ENCODE measurements at regions of chr14 and their contacts with region 1.

Region 1: GRCh38 chr14:73662487-73662943 is 17.7 kb downstream of the DNAL1 start:
- DNase-seq: peak; percentile 93
- H3K4me3 Mint-ChIP-seq: no peak overlapping the region
- H3K27ac Mint-ChIP-seq: peak overlapping the region; percentile 7
- H3K4me1 Mint-ChIP-seq: peaks cover 10% of the 10 kb centered on the region
- H3K27me3 Mint-ChIP-seq: no peaks in the 10 kb centered on the region
- CTCF ChIP-seq: peak; percentile 45

Region 2: DNA sequence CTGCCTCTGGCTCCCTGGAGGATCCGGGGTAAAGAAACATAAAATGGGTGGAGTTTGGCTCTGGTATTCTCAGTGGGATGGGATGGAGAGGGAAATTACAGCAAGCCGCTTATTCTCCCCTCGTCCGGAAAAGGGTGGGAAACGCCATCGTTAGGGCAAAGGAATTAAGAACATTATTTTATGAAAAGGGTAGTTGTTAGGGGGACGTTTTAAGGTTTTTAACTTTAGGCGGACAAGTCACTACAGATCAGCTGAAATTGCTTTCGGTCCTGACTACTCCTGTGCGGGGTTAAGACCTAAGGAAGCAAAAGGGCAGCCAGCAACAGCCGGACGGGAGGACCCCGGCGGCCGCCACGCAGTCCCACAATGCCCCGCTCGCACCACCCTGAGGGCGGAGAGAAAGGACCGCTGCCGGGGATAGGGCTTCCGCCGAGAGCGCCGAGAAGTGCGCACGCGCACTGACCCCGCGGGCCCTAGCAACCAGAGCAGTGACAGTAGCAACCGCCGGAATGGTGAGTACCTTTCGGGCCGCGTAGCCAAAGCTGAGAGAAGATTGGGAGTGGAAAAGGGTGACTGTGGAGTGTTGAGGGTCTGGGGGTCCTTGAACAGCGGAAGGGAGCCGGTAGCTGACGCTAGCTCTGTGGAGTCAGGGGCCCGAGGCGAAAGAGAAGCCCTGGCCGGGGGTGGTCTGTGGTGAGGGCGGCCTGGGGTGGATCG is 17.8 kb before region 1 on chr14 and contains the start of gene DNAL1:
- CTCF ChIA-PET with region 1: no interaction called
- POLR2A ChIA-PET with region 1: interaction called, 23 read pairs
- intact Hi-C with region 1: no loop called
- DNase-seq: peak; percentile 88
- H3K4me3 Mint-ChIP-seq: peak within 1 kb of the TSS; percentile 94
- H3K27ac Mint-ChIP-seq: peak within 1 kb of the TSS; percentile 97
- H3K4me1 Mint-ChIP-seq: peaks cover 9% of the 10 kb centered on the region
- H3K27me3 Mint-ChIP-seq: no peaks in the 10 kb centered on the region
- CTCF ChIP-seq: no peak
- total RNA-seq, gene DNAL1: 18.5 and 33.0 TPM in 2 replicates

Region 3: DNA sequence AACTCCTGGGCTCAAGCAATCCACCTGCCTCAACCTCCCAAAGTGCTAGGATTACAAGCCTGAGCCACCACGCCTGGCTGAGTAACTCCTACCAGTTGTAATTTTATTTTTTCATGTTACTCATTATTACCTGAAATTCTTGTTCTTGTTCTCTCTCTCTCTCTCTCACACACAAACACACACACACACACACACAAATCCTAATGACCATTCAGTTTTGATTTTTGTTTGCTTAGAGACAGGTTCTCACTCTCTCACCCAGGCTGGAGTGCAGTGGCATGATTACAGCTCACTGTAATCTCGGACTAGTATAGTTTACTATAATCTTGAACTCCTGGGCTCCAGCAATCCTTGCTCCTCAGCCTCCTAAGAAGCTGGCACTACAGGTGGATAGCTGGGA is 12.5 kb after region 1 on chr14:
- CTCF ChIA-PET with region 1: interaction called, 20 read pairs
- POLR2A ChIA-PET with region 1: interaction called, 4 read pairs
- intact Hi-C with region 1: no loop called
- DNase-seq: no peak
- H3K4me3 Mint-ChIP-seq: no peak overlapping the region
- H3K27ac Mint-ChIP-seq: no peak overlapping the region
- H3K4me1 Mint-ChIP-seq: no peaks in the 10 kb centered on the region
- H3K27me3 Mint-ChIP-seq: no peaks in the 10 kb centered on the region
- CTCF ChIP-seq: no peak

Region 4: GRCh38 chr14:73713803-73714655 is 51.5 kb after region 1 on chr14 and contains the start of gene PNMA1:
- CTCF ChIA-PET with region 1: interaction called, 3 read pairs
- POLR2A ChIA-PET with region 1: interaction called, 7 read pairs
- intact Hi-C with region 1: loop called (anchors 5 kb)
- DNase-seq: peak; percentile 79
- H3K4me3 Mint-ChIP-seq: peak within 1 kb of the TSS; percentile 86
- H3K27ac Mint-ChIP-seq: peak within 1 kb of the TSS; percentile 86
- H3K4me1 Mint-ChIP-seq: peaks cover 31% of the 10 kb centered on the region
- H3K27me3 Mint-ChIP-seq: no peaks in the 10 kb centered on the region
- CTCF ChIP-seq: no peak
- total RNA-seq, gene PNMA1: 43.3 and 46.3 TPM in 2 replicates